Activated CD8-positive, alpha-beta T cell treated with anti-CD3 and anti-CD28 coated beads, Interleukin-2, amount 10 ng/mL, durations not matched to agents 7 days and 5 days (primary cell): ENCODE measurements at regions of chr15 and their contacts with region 1.

Region 1: GRCh38 chr15:89893696-89894455 is at the start of gene AP3S2:
- DNase-seq: peak; percentile 91
- ATAC-seq: peak; percentile 97
- H3K4me3 Mint-ChIP-seq: peak within 1 kb of the TSS; percentile 92
- H3K27ac Mint-ChIP-seq: peak within 1 kb of the TSS; percentile 92
- H3K4me1 Mint-ChIP-seq: peaks cover 35% of the 10 kb centered on the region
- H3K27me3 Mint-ChIP-seq: peaks cover 2% of the 10 kb centered on the region
- total RNA-seq, gene AP3S2: 24.7 to 25.5 TPM

Region 2: GRCh38 chr15:90080818-90081385 is 187.0 kb after region 1 on chr15:
- CTCF ChIA-PET with region 1: interaction called, 14 read pairs
- POLR2A ChIA-PET with region 1: interaction called, 5 read pairs
- DNase-seq: no peak
- ATAC-seq: no peak
- H3K4me3 Mint-ChIP-seq: no peak overlapping the region
- H3K27ac Mint-ChIP-seq: no peak overlapping the region
- H3K4me1 Mint-ChIP-seq: no peaks in the 10 kb centered on the region
- H3K27me3 Mint-ChIP-seq: no peaks in the 10 kb centered on the region

Region 3: GRCh38 chr15:90086868-90087268 is 193.0 kb after region 1 on chr15:
- CTCF ChIA-PET with region 1: interaction called, 16 read pairs
- POLR2A ChIA-PET with region 1: interaction called, 3 read pairs
- DNase-seq: peak; percentile 70
- ATAC-seq: peak; percentile 73
- H3K4me3 Mint-ChIP-seq: no peak overlapping the region
- H3K27ac Mint-ChIP-seq: peak overlapping the region; percentile 63
- H3K4me1 Mint-ChIP-seq: peaks cover 15% of the 10 kb centered on the region
- H3K27me3 Mint-ChIP-seq: no peaks in the 10 kb centered on the region

Region 4: DNA sequence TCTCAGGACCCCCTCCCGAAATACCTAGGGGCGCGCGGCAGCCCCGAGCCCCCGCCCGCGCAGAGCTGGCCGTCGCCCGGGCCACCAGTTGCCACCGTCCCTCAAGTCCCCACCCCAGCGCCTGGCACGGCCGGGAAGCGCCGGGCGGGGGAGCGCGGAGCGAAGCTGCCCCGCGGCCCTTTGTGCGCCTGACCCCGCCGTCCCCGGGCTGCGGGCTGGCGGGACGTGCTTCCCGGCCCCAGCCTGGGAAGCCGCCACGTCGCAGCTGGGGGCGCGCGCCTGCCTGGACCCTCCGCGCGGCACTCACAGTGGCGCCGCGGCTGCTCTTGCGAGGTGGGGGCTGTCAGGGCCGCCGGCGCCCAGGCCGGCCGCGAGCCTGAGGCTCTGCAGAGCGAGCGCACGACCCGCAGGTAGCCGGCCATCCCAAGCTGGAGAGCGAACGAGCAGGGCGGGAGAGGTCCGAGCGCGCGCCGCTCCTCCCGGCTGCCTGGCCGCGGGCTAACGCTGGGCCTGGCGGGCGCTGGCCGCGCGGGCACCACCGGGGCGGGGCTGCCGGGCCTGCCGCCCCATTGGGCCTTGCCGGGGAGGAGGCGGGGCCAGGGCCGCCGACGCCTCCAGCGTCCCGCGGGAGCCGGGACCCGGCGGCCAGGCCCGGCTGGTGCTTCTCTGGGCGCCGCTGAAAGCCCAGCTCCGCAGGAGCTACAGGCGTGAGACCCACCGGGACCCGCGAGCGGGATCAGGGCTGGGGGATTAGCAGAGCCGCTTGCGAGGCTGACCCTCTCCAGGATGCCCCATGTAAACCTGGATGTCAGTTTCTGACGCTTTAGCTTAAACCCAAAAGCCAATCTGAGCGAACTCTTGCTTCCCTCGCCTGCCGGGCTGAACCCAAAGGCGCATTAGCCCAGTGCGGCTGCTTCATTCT is 208.4 kb after region 1 on chr15 and contains the start of gene IDH2:
- CTCF ChIA-PET with region 1: interaction called, 4 read pairs
- POLR2A ChIA-PET with region 1: interaction called, 17 read pairs
- DNase-seq: peak; percentile 75
- ATAC-seq: peak; percentile 85
- H3K4me3 Mint-ChIP-seq: peak within 1 kb of the TSS; percentile 93
- H3K27ac Mint-ChIP-seq: peak within 1 kb of the TSS; percentile 99
- H3K4me1 Mint-ChIP-seq: peaks cover 54% of the 10 kb centered on the region
- H3K27me3 Mint-ChIP-seq: peaks cover 5% of the 10 kb centered on the region
- total RNA-seq, gene IDH2: 291 to 301 TPM